PC-3 (cell line): ENCODE measurements at regions of chr11 and their contacts with region 1.

Region 1: GRCh38 chr11:68235650-68236049 is 22.6 kb upstream of the KMT5B start:
- DNase-seq: no peak
- ATAC-seq: no peak
- H3K4me3 ChIP-seq: no peak overlapping the region
- H3K27ac ChIP-seq: no peak overlapping the region
- H3K4me1 ChIP-seq: no peaks in the 10 kb centered on the region
- H3K27me3 ChIP-seq: no peaks in the 10 kb centered on the region
- CTCF ChIP-seq: no peak

Region 2: DNA sequence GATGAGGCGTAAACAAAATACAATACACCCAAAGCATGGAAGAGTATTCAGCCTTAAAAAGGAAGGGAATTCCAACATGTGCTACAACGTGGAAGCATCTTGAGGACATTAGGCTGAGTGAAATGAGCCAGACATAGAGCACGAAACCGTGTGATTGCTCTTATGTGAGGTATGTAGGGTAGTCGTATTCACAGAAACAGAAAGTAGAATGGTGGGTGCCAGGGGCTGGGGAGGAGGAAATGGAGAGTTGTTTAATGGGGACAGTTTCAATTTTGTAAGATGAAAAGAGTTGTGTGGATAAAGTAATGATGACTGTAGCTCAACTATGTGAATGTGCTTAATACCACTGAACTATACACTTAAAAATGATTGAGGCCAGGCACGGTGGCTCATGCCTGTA is 12.4 kb before region 1 on chr11:
- CTCF ChIA-PET with region 1: interaction called, 12 read pairs
- POLR2A ChIA-PET with region 1: interaction called, 10 read pairs
- intact Hi-C with region 1: no loop called
- DNase-seq: no peak
- ATAC-seq: no peak
- H3K4me3 ChIP-seq: no peak overlapping the region
- H3K27ac ChIP-seq: no peak overlapping the region
- H3K4me1 ChIP-seq: no peaks in the 10 kb centered on the region
- H3K27me3 ChIP-seq: no peaks in the 10 kb centered on the region
- CTCF ChIP-seq: no peak